ENCODE measurements at regions of chr6 and their contacts with region 1.

Region 1: DNA sequence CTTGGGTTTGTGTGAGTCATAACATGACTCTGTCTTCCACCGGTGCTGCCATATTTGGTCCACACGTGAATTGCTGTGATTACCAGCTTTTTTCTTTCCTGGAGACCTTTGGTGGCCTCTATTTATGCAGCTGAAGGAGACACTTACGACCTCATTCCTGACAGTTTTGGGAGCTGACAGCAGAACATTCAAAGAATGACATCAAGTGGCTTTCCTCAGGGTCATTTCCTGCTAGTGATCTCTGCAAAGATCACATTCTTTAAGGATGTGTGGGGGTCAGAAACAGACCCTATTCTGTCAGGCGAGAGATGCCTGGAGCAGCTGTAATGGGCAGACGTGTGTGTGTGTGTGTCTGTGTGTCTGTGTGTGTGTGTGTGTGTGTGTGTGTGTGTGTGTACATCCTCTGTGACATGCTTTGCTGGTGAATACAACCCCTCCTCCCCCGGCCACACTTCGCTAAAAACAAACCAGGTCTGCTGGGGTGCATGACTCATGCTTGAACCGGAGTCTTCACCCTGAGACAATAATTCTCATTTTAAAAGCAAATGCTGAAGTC is 115.6 kb downstream of the TMEM170B start:
- H3K4me3 Mint-ChIP-seq: no peak overlapping the region
- H3K27ac Mint-ChIP-seq: no peak overlapping the region
- H3K4me1 Mint-ChIP-seq: no peaks in the 10 kb centered on the region
- H3K27me3 Mint-ChIP-seq: peaks cover 15% of the 10 kb centered on the region

Region 2: DNA sequence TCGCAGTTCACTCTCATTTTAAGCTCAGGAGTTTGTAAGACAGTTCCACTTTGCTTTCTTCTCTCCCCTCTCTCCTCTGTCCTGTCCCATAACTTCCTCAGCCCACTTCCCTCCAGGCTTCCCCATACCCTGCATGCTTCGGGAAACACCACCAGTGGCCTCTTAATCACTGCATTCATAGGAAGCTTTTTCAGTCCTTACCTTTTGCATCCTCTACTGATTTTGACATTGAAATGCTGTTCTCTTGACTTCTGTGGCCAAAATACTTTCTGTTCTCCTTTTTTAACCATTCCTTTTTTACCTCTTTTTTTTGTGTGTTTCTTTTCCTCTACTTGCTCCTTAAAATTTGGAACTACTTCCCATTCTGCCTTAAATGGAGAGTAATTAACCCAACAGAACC is 428.7 kb after region 1 on chr6:
- intact Hi-C with region 1: loop called (anchors 10 kb)
- H3K4me3 Mint-ChIP-seq: no peak overlapping the region
- H3K27ac Mint-ChIP-seq: peak overlapping the region; percentile 33
- H3K4me1 Mint-ChIP-seq: peaks cover 28% of the 10 kb centered on the region
- H3K27me3 Mint-ChIP-seq: no peaks in the 10 kb centered on the region

Region 3: DNA sequence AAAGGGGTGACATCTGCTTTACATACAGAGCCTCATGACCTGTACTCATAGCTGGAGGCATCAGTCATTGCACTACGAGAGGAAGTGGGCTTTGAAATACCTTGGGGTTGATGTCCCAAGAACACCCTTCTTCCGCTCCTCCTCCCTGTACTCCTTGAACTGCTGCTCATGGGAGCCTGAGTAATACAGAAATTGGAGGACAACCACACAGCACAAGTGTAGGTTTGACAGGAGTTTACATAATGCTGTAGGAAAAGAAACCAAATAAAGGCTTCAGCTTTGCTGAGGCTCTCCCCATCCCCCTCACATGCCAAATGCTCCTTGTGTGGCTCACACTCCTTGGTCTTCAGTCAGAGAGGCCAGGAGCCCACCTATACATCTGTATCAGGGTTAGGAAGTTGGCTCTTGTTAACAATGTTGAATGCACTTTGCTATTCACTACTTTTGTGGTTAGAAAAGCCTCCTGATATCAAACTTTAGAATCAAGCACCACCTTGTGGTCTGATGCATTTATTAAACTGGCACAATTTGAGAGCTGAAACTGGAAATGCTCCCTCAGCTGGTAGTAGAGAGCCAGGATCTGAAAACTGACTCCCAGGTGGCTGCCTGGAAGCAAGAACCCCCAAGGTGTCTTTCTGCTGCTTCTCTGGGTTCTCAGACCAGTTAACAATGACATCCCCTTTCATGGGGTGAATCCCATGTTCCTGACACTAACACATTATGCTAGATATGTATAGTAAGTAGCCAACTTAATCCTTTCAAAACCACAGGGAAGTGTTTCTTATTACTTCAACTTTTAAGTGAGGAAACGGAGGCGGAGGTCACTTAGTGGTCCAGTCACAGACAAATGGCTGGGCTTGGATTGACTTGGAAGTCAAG is 580.8 kb after region 1 on chr6:
- intact Hi-C with region 1: loop called (anchors 2 kb)
- H3K4me3 Mint-ChIP-seq: no peak overlapping the region
- H3K27ac Mint-ChIP-seq: no peak overlapping the region
- H3K4me1 Mint-ChIP-seq: peaks cover 40% of the 10 kb centered on the region
- H3K27me3 Mint-ChIP-seq: peaks cover 4% of the 10 kb centered on the region

Region 4: GRCh38 chr6:12605888-12606345 is 952.8 kb after region 1 on chr6:
- intact Hi-C with region 1: loop called (anchors 5 kb)
- H3K4me3 Mint-ChIP-seq: no peak overlapping the region
- H3K27ac Mint-ChIP-seq: no peak overlapping the region
- H3K4me1 Mint-ChIP-seq: peaks cover 7% of the 10 kb centered on the region
- H3K27me3 Mint-ChIP-seq: peaks cover 4% of the 10 kb centered on the region

Measured in dendritic cell treated with granulocyte-macrophage colony-stimulating factor and Interleukin-4, amounts not matched to agents 40 ng/mL and 50 ng/mL, for 4 days (primary cell).